A673 (cell line): ENCODE measurements at regions of chr4 and their contacts with region 1.

Region 1: GRCh38 chr4:48079972-48080391 is 54.1 kb downstream of the TXK start:
- DNase-seq: peak; percentile 37
- H3K4me3 ChIP-seq: no peak overlapping the region
- H3K27ac ChIP-seq: no peak overlapping the region
- H3K4me1 ChIP-seq: no peaks in the 10 kb centered on the region
- H3K27me3 ChIP-seq: no peaks in the 10 kb centered on the region
- CTCF ChIP-seq: no peak

Region 2: DNA sequence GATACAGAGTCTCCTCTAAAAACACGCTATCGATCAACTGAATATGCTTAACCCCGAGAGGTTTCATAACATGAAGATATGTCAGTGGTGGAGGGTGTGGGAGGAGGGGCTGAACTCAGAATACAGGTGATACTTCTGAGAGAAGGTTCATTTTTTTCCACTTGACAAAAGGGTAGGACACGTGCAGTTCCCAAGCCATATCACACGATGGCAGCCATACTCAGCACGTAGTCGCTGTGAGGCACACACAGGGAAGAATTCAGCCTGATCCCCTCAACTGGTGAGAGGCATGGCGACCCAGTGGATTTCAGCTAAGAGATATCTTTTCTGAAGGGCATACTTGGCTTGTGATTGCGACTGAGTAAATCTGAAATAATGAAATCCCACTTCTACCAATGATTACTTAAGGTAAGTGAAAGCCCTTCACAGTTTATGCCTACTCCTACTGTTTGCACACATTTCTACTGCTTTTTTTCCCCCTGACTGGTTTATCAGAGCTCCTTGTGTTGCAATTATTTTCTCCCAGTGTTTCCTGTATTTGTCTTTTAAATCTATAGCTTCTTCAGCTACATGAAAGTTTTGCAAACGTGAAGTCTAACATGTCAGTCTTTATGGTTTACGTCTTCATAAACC is 375.2 kb before region 1 on chr4:
- CTCF ChIA-PET with region 1: no interaction called
- POLR2A ChIA-PET with region 1: no interaction called
- intact Hi-C with region 1: loop called (anchors 10 kb)
- DNase-seq: peak; percentile 70
- H3K4me3 ChIP-seq: no peak overlapping the region
- H3K27ac ChIP-seq: no peak overlapping the region
- H3K4me1 ChIP-seq: peaks cover 25% of the 10 kb centered on the region
- H3K27me3 ChIP-seq: no peaks in the 10 kb centered on the region
- CTCF ChIP-seq: peak; percentile 68

Region 3: GRCh38 chr4:48016141-48017103 is 63.6 kb before region 1 on chr4 and contains the starts of genes CNGA1 and NIPAL1:
- CTCF ChIA-PET with region 1: no interaction called
- POLR2A ChIA-PET with region 1: no interaction called
- intact Hi-C with region 1: loop called (anchors 5 kb)
- DNase-seq: peak; percentile 85
- H3K4me3 ChIP-seq: peak within 1 kb of the TSS; percentile 71
- H3K27ac ChIP-seq: no peak within 1 kb of the TSS
- H3K4me1 ChIP-seq: no peaks in the 10 kb centered on the region
- H3K27me3 ChIP-seq: no peaks in the 10 kb centered on the region
- CTCF ChIP-seq: peak; percentile 55
- total RNA-seq, gene CNGA1: 0.39 TPM in 1 of 2 replicates, not detected in the other
- total RNA-seq, gene NIPAL1: 0.46 and 0.84 TPM in 2 replicates

Region 4: DNA sequence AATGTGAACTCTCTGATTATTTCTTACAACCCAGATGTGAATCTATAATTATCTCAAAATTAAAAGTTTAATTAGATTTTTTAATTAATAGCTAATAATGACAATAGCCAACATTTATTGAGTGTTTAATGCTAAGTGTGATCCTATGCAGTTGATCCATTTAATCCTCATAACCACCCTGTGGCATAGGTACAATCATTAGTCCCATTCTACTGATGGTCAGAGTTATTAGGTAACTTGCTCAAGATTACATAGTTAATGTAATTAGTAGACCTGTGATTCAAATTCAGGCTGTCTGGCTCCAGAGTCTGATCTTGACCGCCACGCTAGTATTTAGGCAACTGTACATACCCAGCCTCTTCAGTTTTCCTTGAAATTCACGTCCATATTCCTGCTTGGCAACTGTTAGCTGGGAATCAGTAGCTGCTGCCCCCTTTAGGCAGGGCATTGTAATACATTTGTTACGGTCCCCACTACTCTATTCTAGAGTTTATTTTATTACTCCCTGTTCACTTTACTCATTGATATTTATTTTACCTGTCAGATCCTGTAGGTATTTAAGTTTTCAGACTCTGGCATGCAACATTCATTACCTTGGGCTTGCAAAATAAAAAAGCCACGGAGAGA is 210.3 kb after region 1 on chr4:
- CTCF ChIA-PET with region 1: no interaction called
- POLR2A ChIA-PET with region 1: no interaction called
- intact Hi-C with region 1: no loop called
- DNase-seq: peak; percentile 32
- H3K4me3 ChIP-seq: no peak overlapping the region
- H3K27ac ChIP-seq: no peak overlapping the region
- H3K4me1 ChIP-seq: no peaks in the 10 kb centered on the region
- H3K27me3 ChIP-seq: no peaks in the 10 kb centered on the region
- CTCF ChIP-seq: peak; percentile 75